Mammary epithelial cell (primary cell): ENCODE measurements at regions of chr19 and their contacts with region 1.

Region 1: DNA sequence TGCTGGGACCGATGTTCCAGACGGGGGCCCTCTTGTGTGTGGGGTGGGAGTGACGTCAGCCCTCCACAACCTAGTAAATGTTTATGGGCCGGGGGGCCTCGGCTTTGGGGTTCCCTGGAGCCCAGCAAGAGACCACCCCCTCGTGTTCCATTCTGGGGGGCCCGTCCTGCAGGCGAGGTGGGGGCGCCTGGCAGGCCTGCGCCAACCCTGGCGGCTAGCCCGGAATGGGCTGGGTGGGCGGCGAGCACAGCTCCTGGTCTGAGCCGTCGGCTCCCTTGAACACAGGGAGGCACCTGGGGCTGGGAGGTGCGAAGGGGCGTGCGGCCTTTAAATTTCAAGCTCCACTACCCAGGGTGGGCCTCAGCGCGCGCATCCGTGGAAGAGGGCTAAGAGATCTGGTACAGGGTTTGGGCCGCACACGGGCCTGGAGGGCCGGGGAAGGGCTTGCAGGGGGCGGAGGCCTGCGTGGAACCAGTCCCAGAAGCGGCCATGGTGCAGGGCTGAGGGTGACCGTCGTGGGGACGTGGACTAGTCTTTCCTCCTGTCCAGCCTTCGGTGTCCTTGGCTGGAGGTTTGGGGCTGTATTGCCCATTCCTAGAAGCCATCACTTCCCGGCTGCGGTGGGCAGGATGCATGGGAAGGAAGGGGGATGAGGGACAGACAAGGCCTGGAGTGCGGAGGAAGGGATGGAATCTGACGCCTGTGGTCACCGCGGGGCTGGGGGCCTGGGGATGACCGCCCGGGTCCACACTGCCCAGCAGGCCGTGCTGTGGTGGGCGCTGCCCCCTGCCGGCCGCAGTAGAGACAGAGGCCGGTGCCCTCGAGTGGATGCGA is 11.4 kb downstream of the NDUFA11 start:
- DNase-seq: no peak
- H3K4me3 ChIP-seq: no peak overlapping the region
- H3K27ac ChIP-seq: no peak overlapping the region
- H3K4me1 ChIP-seq: peaks cover 10% of the 10 kb centered on the region
- H3K27me3 ChIP-seq: no peaks in the 10 kb centered on the region
- CTCF ChIP-seq: peak; percentile 50 to 76

Region 2: GRCh38 chr19:5857203-5858081 is 34.7 kb before region 1 on chr19:
- CTCF ChIA-PET with region 1: no interaction called
- dilution Hi-C with region 1: loop called (anchors 5 kb)
- in situ Hi-C with region 1: no loop called
- intact Hi-C with region 1: no loop called
- DNase-seq: no peak
- H3K4me3 ChIP-seq: no peak overlapping the region
- H3K27ac ChIP-seq: no peak overlapping the region
- H3K4me1 ChIP-seq: no peaks in the 10 kb centered on the region
- H3K27me3 ChIP-seq: no peaks in the 10 kb centered on the region
- CTCF ChIP-seq: no peak